ENCODE measurements at regions of chr17 and their contacts with region 1.

Region 1: GRCh38 chr17:2416010-2416734 is 15.3 kb upstream of the MNT start:
- DNase-seq: peak; percentile 88
- ATAC-seq: peak; percentile 81
- H3K4me3 Mint-ChIP-seq: no peak overlapping the region
- H3K27ac Mint-ChIP-seq: no peak overlapping the region
- H3K4me1 Mint-ChIP-seq: peaks cover 4% of the 10 kb centered on the region
- H3K27me3 Mint-ChIP-seq: no peaks in the 10 kb centered on the region

Region 2: DNA sequence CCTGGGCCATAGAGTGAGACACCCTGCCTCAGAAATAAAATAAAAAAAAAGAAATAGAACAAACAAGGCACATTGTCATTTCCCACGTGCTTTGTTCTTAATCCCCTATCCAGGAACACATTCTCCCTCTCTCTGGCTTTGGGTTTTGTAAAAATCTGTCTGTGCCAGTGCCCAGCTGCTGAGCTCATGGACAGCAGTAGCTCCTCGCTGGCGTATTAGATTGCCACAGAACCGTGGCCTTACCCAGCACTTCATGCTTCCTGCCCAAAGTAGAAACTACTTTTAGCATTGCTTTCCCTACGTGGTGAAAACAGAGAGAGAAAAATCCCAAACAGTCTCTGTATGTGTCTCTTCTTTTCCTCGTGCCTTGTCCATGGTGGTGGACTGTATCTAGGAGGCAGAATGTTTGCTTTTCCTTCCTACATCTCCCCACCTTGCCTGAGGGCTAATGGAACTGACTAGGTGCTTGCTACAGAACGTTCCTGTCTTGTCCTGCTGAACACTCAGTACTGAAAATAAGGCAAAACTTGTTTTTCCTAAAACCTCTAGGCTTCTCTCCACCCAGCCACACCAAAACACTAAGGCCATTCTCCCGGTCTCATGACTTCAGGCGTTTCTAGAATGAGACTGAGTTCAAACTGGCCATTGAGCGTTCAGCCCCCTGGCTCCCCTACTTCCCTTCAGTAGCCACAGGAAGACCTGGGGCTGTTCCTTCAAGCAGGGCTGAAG is 41.5 kb before region 1 on chr17:
- CTCF ChIA-PET with region 1: interaction called, 479 read pairs
- POLR2A ChIA-PET with region 1: no interaction called
- DNase-seq: no peak
- ATAC-seq: no peak
- H3K4me3 Mint-ChIP-seq: no peak overlapping the region
- H3K27ac Mint-ChIP-seq: peak overlapping the region; percentile 73
- H3K4me1 Mint-ChIP-seq: no peaks in the 10 kb centered on the region
- H3K27me3 Mint-ChIP-seq: no peaks in the 10 kb centered on the region

Region 3: GRCh38 chr17:2386400-2387085 is 29.6 kb before region 1 on chr17:
- CTCF ChIA-PET with region 1: interaction called, 479 read pairs
- POLR2A ChIA-PET with region 1: interaction called, 30 read pairs
- DNase-seq: no peak
- ATAC-seq: no peak
- H3K4me3 Mint-ChIP-seq: no peak overlapping the region
- H3K27ac Mint-ChIP-seq: no peak overlapping the region
- H3K4me1 Mint-ChIP-seq: peaks cover 35% of the 10 kb centered on the region
- H3K27me3 Mint-ChIP-seq: no peaks in the 10 kb centered on the region

Region 4: GRCh38 chr17:2401426-2402221 is 14.5 kb before region 1 on chr17:
- CTCF ChIA-PET with region 1: interaction called, 63 read pairs
- POLR2A ChIA-PET with region 1: interaction called, 4 read pairs
- DNase-seq: peak; percentile 100
- ATAC-seq: peak; percentile 62
- H3K4me3 Mint-ChIP-seq: peak overlapping the region; percentile 94
- H3K27ac Mint-ChIP-seq: peak overlapping the region; percentile 100
- H3K4me1 Mint-ChIP-seq: peaks cover 55% of the 10 kb centered on the region
- H3K27me3 Mint-ChIP-seq: no peaks in the 10 kb centered on the region

Region 5: GRCh38 chr17:2435181-2435741 is 19.1 kb after region 1 on chr17:
- CTCF ChIA-PET with region 1: interaction called, 53 read pairs
- POLR2A ChIA-PET with region 1: no interaction called
- DNase-seq: no peak
- ATAC-seq: no peak
- H3K4me3 Mint-ChIP-seq: no peak overlapping the region
- H3K27ac Mint-ChIP-seq: no peak overlapping the region
- H3K4me1 Mint-ChIP-seq: no peaks in the 10 kb centered on the region
- H3K27me3 Mint-ChIP-seq: no peaks in the 10 kb centered on the region

Region 6: GRCh38 chr17:2796164-2797125 is 380.3 kb after region 1 on chr17 and contains the start of gene RAP1GAP2:
- CTCF ChIA-PET with region 1: no interaction called
- POLR2A ChIA-PET with region 1: no interaction called
- DNase-seq: peak; percentile 88
- ATAC-seq: peak; percentile 82
- H3K4me3 Mint-ChIP-seq: peak within 1 kb of the TSS; percentile 77
- H3K27ac Mint-ChIP-seq: peak within 1 kb of the TSS; percentile 50
- H3K4me1 Mint-ChIP-seq: peaks cover 78% of the 10 kb centered on the region
- H3K27me3 Mint-ChIP-seq: peaks cover 39% of the 10 kb centered on the region
- total RNA-seq, gene RAP1GAP2: 9.4 to 11.0 TPM

Measured in activated CD8-positive, alpha-beta T cell treated with anti-CD3 and anti-CD28 coated beads, Interleukin-2, amount 10 ng/mL, durations not matched to agents 7 days and 5 days (primary cell).